Mammary epithelial cell (primary cell): ENCODE measurements at regions of chr1 and their contacts with region 1.

Region 1: DNA sequence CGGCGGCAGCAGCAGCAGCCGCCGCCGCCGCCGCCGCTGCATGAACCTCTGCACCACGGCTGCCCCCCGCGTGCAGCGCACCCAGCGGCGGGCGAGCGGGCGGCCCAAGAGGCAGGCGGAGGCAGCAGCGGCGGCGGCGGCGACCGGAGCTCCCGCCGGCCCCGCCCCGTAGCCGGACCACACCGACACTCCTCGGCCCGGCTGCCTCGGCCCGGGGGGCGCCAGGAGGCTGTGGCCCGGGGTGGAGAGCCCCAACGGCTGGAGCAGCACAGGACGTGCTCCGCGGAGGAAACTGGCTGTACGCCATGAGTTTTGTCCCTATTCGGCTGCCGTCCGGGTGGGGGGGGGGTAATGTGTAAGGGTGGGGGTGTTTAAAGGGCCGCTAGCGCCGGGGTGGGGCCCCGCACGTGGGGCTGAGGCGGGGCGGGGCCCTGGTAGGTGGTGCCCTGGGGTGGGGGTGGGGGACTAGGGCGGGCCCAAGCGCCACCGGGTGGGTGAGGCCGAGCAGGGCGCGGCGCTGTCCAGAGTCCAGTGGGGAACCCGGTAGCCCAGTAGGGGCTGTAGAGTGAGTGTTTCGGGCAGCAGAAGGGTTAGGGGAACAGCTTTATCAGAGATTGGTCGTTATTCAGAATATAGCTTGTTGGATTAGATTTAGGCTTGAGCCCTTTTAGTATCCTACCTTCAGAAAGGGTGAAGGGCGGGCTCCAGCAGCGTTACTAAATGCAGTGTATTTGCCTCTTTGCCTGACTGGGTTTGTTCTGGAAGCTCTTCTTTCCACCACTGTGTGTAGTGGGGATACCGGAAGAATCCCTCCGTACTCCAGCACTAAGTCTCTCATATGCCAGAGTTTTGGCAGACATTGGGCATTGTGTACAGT is at the start of gene FAM78B:
- DNase-seq: peak; percentile 67
- H3K4me3 ChIP-seq: peak within 1 kb of the TSS; percentile 44 to 69 (median 65)
- H3K27ac ChIP-seq: no peak within 1 kb of the TSS
- H3K4me1 ChIP-seq: peaks cover 38% of the 10 kb centered on the region
- H3K27me3 ChIP-seq: peaks cover 20% of the 10 kb centered on the region
- CTCF ChIP-seq: peak in 1 of 2 donors; percentile 7
- total RNA-seq, gene FAM78B: 0.33 to 0.40 TPM

Region 2: DNA sequence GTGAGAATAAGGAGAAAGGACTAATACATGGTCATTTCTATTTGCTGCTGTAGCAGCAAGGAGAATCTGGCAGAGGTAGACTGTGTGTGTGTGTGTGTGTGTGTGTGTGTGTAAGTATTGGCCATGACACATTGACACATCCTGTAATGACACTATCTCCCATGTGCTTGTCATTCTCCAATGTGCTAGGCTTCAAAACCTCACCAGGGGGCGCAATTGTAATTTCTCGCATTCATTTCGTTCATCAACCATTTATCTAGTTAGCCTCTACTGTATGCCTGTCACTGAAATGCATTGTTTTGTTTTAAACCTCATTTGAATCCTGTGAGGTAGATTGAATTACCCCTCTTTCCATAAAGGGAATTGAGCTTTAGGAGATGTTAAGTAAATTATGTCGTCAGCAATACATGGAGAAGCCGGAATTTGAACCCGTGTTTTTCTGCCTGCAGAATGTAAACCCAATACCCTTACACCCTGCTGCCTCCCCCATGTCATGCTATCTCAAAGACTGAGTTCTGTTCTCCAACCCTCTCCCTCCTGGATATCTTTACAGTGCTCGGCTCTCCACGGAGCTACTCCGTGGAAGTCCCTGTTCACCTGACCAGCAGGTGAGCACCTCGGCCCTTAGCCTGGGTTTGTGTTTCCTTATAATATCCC is 238.7 kb before region 1 on chr1:
- CTCF ChIA-PET with region 1: no interaction called
- dilution Hi-C with region 1: no loop called
- in situ Hi-C with region 1: no loop called
- intact Hi-C with region 1: loop called (anchors 5 kb)
- DNase-seq: peak; percentile 60
- H3K4me3 ChIP-seq: no peak overlapping the region
- H3K27ac ChIP-seq: no peak overlapping the region
- H3K4me1 ChIP-seq: no peaks in the 10 kb centered on the region
- H3K27me3 ChIP-seq: no peaks in the 10 kb centered on the region
- CTCF ChIP-seq: peak; percentile 64 to 78

Region 3: GRCh38 chr1:166032572-166033371 is 134.2 kb before region 1 on chr1:
- CTCF ChIA-PET with region 1: no interaction called
- dilution Hi-C with region 1: no loop called
- in situ Hi-C with region 1: no loop called
- intact Hi-C with region 1: no loop called
- DNase-seq: no peak
- H3K4me3 ChIP-seq: no peak overlapping the region
- H3K27ac ChIP-seq: no peak overlapping the region
- H3K4me1 ChIP-seq: no peaks in the 10 kb centered on the region
- H3K27me3 ChIP-seq: no peaks in the 10 kb centered on the region
- CTCF ChIP-seq: no peak

Region 4: GRCh38 chr1:166197141-166197540 is 30.2 kb after region 1 on chr1:
- CTCF ChIA-PET with region 1: no interaction called
- dilution Hi-C with region 1: loop called (anchors 5 kb)
- in situ Hi-C with region 1: no loop called
- intact Hi-C with region 1: no loop called
- DNase-seq: peak; percentile 18
- H3K4me3 ChIP-seq: no peak overlapping the region
- H3K27ac ChIP-seq: no peak overlapping the region
- H3K4me1 ChIP-seq: no peaks in the 10 kb centered on the region
- H3K27me3 ChIP-seq: no peaks in the 10 kb centered on the region
- CTCF ChIP-seq: no peak

Region 5: GRCh38 chr1:166479052-166479631 is 312.2 kb after region 1 on chr1:
- CTCF ChIA-PET with region 1: no interaction called
- dilution Hi-C with region 1: no loop called
- in situ Hi-C with region 1: no loop called
- intact Hi-C with region 1: loop called (anchors 1 kb)
- DNase-seq: peak; percentile 9
- H3K4me3 ChIP-seq: no peak overlapping the region
- H3K27ac ChIP-seq: no peak overlapping the region
- H3K4me1 ChIP-seq: no peaks in the 10 kb centered on the region
- H3K27me3 ChIP-seq: no peaks in the 10 kb centered on the region
- CTCF ChIP-seq: peak; percentile 67 to 70